Panc1 (cell line): ENCODE measurements at regions of chr1 and their contacts with region 1.

Region 1: GRCh38 chr1:152141974-152142584 is 16.9 kb downstream of the RPTN start:
- DNase-seq: peak; percentile 41
- ATAC-seq: peak; percentile 94
- H3K4me3 ChIP-seq: no peak overlapping the region
- H3K27ac ChIP-seq: no peak overlapping the region
- H3K4me1 ChIP-seq: no peaks in the 10 kb centered on the region
- H3K27me3 ChIP-seq: peaks cover 4% of the 10 kb centered on the region
- CTCF ChIP-seq: peak; percentile 86

Region 2: DNA sequence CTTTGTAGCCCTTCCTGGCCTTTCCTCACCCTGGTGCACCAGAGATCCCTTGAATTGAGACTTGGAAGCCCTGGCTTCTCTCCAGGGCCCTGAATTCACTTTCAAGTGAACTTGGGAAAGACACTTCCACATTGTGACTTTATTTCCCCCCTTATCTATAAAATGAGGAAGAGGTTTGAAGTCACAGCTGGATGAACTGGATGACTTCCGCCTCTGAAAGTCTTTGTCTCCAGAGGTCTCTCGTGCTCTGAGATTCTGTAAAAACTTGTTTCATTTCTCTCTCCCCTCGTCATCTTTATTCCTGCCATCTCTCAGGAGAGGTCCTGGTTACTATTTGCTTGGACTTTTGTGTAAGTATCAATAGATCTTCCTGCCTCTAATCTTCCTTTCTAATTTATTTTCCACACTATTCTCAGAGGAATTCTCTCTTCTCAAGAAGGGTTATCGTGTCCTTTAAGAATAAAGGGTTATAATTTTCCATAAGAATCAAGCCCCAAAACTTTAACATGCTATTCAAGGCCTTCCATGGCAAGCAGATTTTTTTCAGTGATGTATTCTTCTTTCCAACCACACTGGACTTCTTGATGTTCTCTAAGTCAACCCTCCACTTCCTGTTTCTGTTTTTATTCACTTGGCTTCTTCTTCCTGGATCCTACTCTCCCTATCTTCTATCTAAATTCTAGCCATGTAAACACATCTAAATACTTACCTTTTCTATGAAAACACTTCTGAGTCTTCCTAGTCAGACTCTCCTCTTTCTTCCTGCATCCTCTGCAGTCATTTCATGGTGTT is 23.4 kb after region 1 on chr1:
- CTCF ChIA-PET with region 1: interaction called, 3 read pairs
- POLR2A ChIA-PET with region 1: no interaction called
- in situ Hi-C with region 1: no loop called
- intact Hi-C with region 1: loop called (anchors 1 kb)
- DNase-seq: no peak
- ATAC-seq: no peak
- H3K4me3 ChIP-seq: no peak overlapping the region
- H3K27ac ChIP-seq: no peak overlapping the region
- H3K4me1 ChIP-seq: no peaks in the 10 kb centered on the region
- H3K27me3 ChIP-seq: no peaks in the 10 kb centered on the region
- CTCF ChIP-seq: no peak

Region 3: GRCh38 chr1:152191266-152191665 is 49.2 kb after region 1 on chr1:
- CTCF ChIA-PET with region 1: no interaction called
- POLR2A ChIA-PET with region 1: no interaction called
- in situ Hi-C with region 1: no loop called
- intact Hi-C with region 1: no loop called
- DNase-seq: no peak
- ATAC-seq: no peak
- H3K4me3 ChIP-seq: no peak overlapping the region
- H3K27ac ChIP-seq: no peak overlapping the region
- H3K4me1 ChIP-seq: peaks cover 3% of the 10 kb centered on the region; the same call in 1 of the 2 replicates
- H3K27me3 ChIP-seq: no peaks in the 10 kb centered on the region
- CTCF ChIP-seq: no peak